ENCODE measurements at regions of chr21 and their contacts with region 1.

Region 1: DNA sequence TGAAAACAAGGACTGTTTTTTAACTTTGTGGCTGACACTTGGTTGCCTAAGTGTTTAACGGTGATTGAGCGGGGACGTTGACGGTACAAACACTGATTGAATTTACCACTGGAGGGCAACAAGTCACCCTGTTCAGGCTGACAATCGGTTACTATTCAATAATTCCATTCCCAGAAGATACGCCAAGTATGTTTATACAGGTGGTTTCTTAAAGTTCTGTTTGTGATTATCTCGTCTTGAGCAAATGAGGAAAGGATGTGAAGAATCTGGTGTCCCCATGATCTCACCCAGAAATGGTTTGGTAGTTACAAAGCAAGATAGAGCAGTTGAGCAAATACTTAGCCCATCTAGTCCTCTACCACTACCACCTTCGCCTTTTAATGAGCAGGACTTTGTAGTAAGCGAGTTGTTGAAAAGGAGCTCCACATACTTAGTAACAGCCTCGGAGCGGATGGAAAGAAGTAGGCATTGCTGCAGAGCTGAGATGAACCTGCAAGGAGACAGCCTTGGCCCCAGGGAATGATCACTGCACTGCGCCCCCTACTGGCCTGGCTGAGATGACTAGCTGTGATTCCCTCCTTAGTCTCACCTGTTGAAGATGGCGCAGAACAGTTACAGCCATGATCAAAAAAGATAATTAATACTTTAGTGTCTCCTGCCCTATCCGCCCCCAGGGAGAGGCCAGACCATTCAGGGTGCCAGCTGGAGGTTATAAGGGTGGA is 36.3 kb downstream of the IFNAR1 start:
- DNase-seq: no peak
- H3K4me3 ChIP-seq: no peak overlapping the region
- H3K27ac ChIP-seq: peak overlapping the region; percentile 70
- H3K27me3 ChIP-seq: no peaks in the 10 kb centered on the region
- CTCF ChIP-seq: peak; percentile 79

Region 2: GRCh38 chr21:33169359-33169758 is 191.7 kb before region 1 on chr21:
- CTCF ChIA-PET with region 1: no interaction called
- POLR2A ChIA-PET with region 1: no interaction called
- DNase-seq: no peak
- H3K4me3 ChIP-seq: no peak overlapping the region
- H3K27ac ChIP-seq: no peak overlapping the region
- H3K27me3 ChIP-seq: peaks cover 6% of the 10 kb centered on the region
- CTCF ChIP-seq: no peak

Region 3: GRCh38 chr21:33199516-33200217 is 161.4 kb before region 1 on chr21:
- CTCF ChIA-PET with region 1: interaction called, 18 read pairs
- POLR2A ChIA-PET with region 1: no interaction called
- DNase-seq: peak; percentile 82
- H3K4me3 ChIP-seq: no peak overlapping the region
- H3K27ac ChIP-seq: no peak overlapping the region
- H3K27me3 ChIP-seq: peaks cover 2% of the 10 kb centered on the region
- CTCF ChIP-seq: peak; percentile 87

Region 4: DNA sequence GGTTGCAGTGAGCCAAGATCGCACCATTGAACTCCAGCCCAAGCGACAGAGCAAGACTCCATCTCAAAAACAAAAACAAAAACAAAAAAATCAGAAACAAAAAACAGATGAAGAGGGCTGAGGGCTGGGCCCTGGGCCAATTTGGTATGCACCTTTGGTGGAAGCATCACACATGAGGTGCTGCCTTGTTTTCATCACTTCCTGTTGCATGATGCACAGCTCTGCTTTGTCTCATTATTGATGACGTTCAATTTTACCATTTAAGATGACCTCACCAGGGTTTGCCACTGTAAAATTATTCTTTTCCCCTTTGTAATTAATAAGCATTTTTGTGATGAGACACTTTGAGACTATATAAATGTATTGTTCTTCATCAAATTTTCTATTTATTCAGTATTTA is 141.1 kb before region 1 on chr21:
- CTCF ChIA-PET with region 1: no interaction called
- POLR2A ChIA-PET with region 1: no interaction called
- DNase-seq: no peak
- H3K4me3 ChIP-seq: no peak overlapping the region
- H3K27ac ChIP-seq: no peak overlapping the region
- H3K27me3 ChIP-seq: peaks cover 4% of the 10 kb centered on the region
- CTCF ChIP-seq: no peak

Region 5: DNA sequence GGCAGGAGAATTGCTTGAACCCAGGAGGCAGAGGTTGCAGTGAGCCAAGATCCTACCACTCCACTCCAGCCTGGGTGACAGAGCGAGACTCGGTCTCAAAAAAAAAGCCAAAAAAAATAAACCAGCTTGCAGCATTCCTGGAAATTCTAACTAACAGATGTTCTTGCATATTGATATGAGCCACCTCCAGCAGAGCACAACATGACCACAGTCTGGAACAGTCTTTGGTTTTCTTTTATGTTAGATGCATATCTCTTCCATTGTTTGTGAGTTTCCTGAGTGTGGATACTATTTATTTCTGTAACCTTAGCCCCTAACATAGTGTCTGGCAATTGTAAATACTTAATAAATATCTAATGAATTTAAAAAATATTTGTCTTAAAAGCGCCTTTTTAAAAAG is 12.3 kb before region 1 on chr21:
- CTCF ChIA-PET with region 1: interaction called, 40 read pairs
- POLR2A ChIA-PET with region 1: no interaction called
- DNase-seq: no peak
- H3K4me3 ChIP-seq: no peak overlapping the region
- H3K27ac ChIP-seq: no peak overlapping the region
- H3K27me3 ChIP-seq: no peaks in the 10 kb centered on the region
- CTCF ChIP-seq: no peak

Region 6: DNA sequence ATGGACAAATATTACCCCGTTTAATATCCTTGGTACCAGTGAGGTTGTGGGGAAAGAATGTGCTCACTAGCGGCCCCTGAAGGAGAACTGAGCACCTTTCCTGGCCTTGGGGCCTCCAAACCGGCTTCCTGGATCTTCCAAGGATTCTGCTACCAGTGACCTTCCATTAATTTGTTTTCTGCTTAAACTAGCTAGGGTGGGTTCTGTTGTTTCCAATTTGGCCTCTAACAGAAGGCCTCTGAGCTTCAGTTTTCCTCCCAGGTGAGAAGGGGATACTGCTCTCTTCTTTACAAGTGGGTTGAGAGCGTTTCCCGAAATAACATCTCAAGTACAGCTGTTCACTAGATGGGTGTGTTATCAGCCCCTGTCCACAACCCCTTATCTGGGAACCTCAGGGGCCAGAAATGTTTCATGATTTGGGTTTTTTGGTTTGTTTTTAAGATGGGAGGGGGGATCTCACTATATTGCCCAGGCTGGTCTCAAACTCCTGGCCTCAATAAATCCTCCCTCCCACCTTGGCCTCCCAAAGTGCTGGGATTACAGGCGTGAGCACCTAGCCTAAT is 25.3 kb after region 1 on chr21:
- CTCF ChIA-PET with region 1: interaction called, 15 read pairs
- POLR2A ChIA-PET with region 1: no interaction called
- DNase-seq: no peak
- H3K4me3 ChIP-seq: no peak overlapping the region
- H3K27ac ChIP-seq: no peak overlapping the region
- H3K27me3 ChIP-seq: peaks cover 4% of the 10 kb centered on the region
- CTCF ChIP-seq: peak; percentile 31

Region 7: DNA sequence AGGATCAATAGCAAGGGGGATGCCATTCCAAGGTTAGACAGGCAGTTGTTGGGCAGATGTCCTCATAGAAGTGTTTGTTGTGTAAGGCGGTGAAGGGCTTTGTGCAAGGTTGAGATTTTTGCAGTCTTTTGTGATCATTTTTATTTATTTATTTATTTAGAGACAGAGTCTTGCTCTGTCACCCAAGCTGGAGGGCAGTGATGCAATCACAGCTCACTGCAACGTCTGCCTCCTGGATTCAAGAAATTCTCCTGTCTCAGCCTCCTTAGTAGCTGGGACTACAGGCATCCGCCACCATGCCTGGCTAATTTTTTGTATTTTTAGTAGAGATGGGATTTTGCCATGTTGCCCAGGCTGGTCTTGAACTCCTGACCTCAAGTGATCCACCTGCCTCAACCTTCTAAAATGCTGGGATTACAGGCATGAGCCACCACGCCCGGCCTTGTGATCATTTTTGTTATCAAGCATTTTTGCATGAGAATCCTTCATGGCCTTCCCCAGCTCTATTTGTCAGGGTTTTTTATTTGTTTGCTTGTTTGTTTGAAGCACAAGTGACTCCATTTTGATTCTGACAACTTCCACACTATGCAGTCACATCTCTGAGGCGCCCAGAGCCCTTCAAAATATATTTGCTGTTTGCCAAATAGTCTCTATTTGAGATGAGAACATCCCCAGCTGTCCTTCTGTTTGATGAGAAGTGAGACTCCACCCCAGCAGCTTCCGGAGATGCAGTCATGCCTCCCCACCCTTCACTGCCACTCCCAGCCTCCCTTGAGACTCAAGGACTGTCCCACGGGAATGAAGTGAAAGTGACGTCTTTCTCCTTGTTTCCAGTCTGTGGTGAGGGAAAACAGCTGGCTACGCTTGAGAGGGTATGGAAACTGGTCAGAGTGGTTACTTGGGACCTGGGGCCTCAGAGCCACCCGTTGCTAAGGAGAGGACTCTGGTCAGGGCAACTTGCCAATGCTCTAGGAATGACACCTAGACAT is 80.7 kb after region 1 on chr21:
- CTCF ChIA-PET with region 1: interaction called, 12 read pairs
- POLR2A ChIA-PET with region 1: interaction called, 3 read pairs
- DNase-seq: peak; percentile 51
- H3K4me3 ChIP-seq: no peak overlapping the region
- H3K27ac ChIP-seq: peak overlapping the region; percentile 43
- H3K27me3 ChIP-seq: no peaks in the 10 kb centered on the region
- CTCF ChIP-seq: no peak

Region 8: DNA sequence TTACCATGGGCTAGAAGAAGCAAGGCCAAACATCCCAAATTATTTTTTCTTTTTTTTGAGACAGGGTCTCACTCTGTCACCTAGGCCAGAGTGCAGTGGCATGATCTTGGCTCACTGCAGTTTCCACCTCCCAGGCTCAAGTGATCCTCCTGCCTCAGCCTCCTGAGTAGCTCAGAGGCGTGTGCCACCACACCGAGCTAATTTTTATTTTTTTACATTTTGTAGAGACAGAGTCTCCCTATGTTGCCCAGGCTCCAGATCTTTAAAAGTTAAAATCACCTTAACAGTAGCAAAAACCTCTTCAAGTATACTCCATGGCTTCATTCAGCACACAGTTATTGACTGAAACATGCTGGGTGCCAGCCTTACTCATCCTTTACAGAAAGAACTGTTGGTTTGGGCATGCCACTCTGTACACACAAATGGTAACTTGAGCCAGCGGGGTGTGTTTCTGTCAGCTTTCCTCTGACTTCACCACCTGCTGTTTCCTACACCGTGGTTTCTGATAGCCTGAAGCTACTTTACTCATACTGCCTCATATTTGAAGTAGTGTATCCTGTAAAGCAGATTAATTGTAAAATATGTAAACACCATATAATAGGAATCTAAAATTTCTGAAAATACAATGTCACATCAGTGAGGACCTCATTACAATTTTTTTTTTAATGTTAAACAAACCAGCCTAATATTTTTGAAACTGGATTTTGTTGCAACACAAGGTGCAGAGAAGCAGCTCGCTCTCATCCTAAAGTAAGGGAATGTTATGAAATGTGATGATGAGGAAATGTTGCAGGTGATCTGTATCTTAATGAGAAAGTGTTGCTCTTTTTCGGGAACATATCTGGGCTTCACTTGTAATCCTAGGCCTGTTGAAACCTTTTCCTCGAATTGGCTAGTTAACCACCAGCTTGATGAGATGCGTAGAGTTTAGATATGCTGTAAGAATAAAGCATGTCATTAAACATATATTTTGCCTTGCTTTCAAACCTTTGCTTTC is 440.7 kb after region 1 on chr21:
- CTCF ChIA-PET with region 1: no interaction called
- POLR2A ChIA-PET with region 1: no interaction called
- DNase-seq: peak; percentile 23
- H3K4me3 ChIP-seq: no peak overlapping the region
- H3K27ac ChIP-seq: no peak overlapping the region
- H3K27me3 ChIP-seq: no peaks in the 10 kb centered on the region
- CTCF ChIP-seq: no peak